ENCODE measurements at regions of chr18 and their contacts with region 1.

Region 1: DNA sequence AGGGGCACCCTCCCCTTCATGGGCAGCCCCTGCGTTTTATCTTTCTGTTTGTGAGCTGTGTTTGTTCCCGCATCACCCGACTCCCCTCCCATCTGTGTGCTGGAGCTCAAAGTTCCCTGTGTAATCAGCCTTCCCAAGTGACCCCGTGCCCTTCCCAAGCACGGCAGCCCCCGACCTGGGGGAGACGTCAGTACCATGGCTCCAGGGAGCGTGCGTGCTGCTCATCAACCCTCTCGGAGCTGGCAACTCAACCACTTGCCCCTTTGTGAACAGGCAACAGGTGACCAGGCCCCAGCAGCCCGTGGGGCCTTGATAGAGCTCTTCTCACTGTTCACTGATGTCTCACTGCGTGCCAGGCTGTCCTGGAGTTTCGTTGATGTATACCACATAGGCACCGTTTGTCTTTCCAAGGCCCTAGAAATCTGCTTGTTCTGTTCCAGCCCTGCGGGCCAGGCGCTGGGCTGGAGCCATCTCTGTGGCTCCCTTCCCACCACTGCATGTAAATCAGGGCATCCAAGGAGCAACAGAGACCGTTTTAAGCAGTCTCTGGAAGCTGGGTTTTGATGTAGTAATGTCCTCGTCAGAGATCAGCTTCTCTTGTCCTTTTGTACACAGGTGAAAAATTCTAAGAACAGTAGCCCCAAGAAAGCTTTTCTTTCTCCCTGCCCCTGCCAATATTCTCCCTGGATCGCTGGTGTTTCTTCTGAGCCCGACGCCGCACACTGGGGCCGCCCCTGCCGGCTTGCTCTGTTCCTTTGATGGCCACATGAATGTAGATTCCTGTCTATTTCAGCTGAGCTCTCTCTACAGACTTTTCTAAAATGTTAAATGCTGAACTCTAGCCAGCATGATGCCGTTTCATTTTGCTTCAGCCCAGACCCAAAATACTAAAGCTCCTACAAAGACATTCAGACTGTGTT is 107.0 kb upstream of the PTPRM start:
- DNase-seq: no peak
- H3K4me3 ChIP-seq: peak overlapping the region; percentile 3 to 54 (median 27)
- H3K27ac ChIP-seq: peak overlapping the region; percentile 41 to 66
- H3K4me1 ChIP-seq: no peaks in the 10 kb centered on the region
- H3K27me3 ChIP-seq: no peaks in the 10 kb centered on the region
- CTCF ChIP-seq: no peak
- POLR2A ChIP-seq: no peak

Region 2: GRCh38 chr18:7066965-7067555 is 393.1 kb before region 1 on chr18:
- intact Hi-C with region 1: loop called (anchors 5 kb)
- DNase-seq: no peak
- H3K4me3 ChIP-seq: no peak overlapping the region
- H3K27ac ChIP-seq: no peak overlapping the region
- H3K4me1 ChIP-seq: no peaks in the 10 kb centered on the region
- H3K27me3 ChIP-seq: no peaks in the 10 kb centered on the region
- CTCF ChIP-seq: no peak
- POLR2A ChIP-seq: no peak

Region 3: DNA sequence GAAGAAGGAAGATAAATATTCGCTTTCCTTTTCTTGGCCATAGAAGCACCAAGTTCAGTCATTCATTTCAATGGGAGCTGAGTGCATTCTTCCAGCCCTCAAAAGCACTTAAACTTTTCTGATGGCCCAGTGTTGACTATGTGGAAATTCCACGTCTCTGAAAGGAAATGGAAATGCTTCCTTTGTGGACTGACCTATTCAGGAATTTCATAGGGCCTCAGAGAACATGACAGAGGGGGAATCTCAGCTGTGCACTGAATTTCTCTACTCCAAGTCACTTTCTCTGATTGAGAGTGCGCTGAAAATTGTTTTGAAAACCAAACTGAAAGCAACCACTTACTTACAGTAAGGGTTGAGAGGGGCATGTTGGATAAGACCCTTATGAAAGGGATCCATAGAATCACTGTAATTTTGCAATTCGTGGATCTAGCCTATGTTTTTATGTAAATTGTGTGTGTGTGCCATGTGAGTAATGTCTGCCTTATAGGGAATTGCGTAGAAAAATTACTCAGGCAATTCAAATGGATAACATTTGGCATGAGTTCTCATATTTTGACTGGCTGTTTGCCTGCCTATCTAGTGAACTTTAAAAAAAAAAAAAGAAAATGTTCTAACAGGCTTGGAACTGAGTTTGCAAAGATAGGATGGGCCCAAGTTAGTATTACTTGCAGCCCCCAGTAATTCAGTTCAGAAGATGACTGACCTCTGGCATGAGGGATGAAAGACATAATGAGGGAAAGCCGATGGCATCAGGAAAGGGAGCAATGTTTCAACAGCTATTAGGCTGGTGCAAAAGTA is 544.0 kb after region 1 on chr18:
- intact Hi-C with region 1: no loop called
- DNase-seq: no peak
- H3K4me3 ChIP-seq: no peak overlapping the region
- H3K27ac ChIP-seq: no peak overlapping the region
- H3K4me1 ChIP-seq: no peaks in the 10 kb centered on the region
- H3K27me3 ChIP-seq: no peaks in the 10 kb centered on the region
- CTCF ChIP-seq: no peak
- POLR2A ChIP-seq: no peak

Measured in breast epithelium (tissue), 4 donors.